ENCODE measurements at regions of chr9 and their contacts with region 1.

Region 1: DNA sequence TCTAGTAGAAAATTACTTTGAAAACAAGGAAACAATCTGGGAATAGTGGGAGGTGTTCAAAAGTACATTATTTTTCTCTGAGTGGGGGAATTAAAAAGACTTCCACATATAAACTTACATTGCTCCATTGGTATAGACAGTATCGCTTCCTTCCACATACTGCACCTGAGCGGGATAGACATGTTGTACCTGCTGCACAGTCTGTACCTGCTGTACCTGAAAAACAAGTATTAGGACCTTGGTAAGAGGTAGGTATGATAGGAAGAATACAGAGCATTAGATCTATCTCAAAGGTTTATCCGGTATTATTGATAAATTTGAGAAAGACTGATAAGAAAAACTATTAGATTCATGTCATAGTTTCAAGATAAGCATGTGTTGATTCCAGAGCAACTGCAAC is 179.3 kb downstream of the RFX3 start:
- DNase-seq: no peak
- ATAC-seq: no peak
- H3K4me3 ChIP-seq: no peak overlapping the region
- H3K27ac ChIP-seq: no peak overlapping the region
- H3K4me1 ChIP-seq: peaks cover 7% of the 10 kb centered on the region
- H3K27me3 ChIP-seq: no peaks in the 10 kb centered on the region
- CTCF ChIP-seq: no peak

Region 2: DNA sequence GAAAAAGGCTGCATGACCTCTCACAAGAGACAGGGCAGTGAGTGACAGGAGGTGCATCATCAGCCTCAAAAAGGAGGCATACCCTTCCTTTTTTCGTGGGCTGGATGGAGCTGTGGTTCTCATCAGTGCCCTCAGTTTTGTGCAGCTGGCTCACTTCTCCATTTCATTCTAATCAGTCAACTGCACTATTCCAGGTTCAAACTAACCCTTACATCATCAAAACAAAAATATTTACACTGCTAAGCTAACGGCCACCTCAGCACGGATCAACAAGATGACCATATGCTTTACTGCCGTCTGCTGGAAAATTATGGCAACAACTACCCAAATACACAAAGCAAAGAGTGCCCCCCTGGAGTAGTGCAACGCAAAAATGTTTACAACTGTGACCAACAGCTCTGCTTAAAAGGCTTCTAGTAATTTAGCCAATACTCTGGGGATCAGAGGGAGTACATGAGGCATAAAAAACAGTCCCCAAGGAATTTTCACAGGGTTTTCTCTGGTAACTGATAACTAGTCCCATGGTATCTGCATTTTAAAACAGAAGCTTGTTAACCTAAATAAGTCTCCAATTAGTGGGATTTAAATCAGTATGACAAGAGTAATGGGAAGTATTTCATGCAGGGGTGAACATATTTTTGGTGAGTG is 618.5 kb before region 1 on chr9:
- intact Hi-C with region 1: no loop called
- DNase-seq: no peak
- ATAC-seq: peak; percentile 80 to 95 (median 90)
- H3K4me3 ChIP-seq: no peak overlapping the region
- H3K27ac ChIP-seq: peak overlapping the region; percentile 58
- H3K4me1 ChIP-seq: peaks cover 18% of the 10 kb centered on the region
- H3K27me3 ChIP-seq: no peaks in the 10 kb centered on the region
- CTCF ChIP-seq: peak; percentile 77

Region 3: GRCh38 chr9:3367185-3367584 is 20.6 kb after region 1 on chr9:
- intact Hi-C with region 1: loop called in 1 of 2 experiments (anchors 1 kb)
- DNase-seq: no peak
- ATAC-seq: no peak
- H3K4me3 ChIP-seq: no peak overlapping the region
- H3K27ac ChIP-seq: no peak overlapping the region
- H3K4me1 ChIP-seq: peaks cover 14% of the 10 kb centered on the region
- H3K27me3 ChIP-seq: no peaks in the 10 kb centered on the region
- CTCF ChIP-seq: no peak